ENCODE measurements at regions of chr5 and their contacts with region 1.

Region 1: DNA sequence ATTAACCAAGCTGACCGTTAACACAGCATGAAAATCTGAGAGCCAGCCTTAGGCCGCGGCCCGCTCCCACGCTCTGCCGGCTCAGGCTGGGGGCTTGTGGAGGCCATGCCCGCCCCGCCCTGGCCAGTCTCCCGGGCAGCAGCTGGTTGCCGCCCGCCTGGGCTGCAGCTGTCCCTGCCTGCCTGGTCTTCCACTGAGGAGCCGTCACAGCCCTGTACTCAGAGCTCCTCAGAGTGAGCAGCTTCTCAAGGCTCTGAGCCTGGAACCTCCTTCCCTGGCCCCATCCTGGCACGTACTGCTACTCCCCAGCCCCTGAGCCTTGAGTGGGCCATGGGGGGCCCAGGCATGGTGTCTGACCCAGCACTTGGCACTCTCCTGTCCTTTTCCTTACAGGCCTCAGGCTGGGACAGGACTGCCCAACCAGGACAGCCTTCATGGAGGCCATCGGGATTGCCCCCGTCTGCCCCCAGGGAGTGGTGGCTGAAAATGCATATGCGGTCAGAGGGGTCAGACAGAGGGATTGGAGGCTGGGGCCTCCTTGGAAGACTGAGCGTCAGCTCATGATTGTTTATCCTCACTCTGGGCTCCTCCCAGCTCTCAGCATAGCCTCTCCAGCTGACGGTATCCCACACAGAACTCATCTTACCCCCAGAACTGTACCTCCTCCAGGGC is 11.9 kb downstream of the FGFR4 start:
- DNase-seq: no peak
- H3K4me3 ChIP-seq: no peak overlapping the region
- H3K27ac ChIP-seq: peak overlapping the region; percentile 84
- H3K27me3 ChIP-seq: peaks cover under 1% of the 10 kb centered on the region
- CTCF ChIP-seq: no peak

Region 2: DNA sequence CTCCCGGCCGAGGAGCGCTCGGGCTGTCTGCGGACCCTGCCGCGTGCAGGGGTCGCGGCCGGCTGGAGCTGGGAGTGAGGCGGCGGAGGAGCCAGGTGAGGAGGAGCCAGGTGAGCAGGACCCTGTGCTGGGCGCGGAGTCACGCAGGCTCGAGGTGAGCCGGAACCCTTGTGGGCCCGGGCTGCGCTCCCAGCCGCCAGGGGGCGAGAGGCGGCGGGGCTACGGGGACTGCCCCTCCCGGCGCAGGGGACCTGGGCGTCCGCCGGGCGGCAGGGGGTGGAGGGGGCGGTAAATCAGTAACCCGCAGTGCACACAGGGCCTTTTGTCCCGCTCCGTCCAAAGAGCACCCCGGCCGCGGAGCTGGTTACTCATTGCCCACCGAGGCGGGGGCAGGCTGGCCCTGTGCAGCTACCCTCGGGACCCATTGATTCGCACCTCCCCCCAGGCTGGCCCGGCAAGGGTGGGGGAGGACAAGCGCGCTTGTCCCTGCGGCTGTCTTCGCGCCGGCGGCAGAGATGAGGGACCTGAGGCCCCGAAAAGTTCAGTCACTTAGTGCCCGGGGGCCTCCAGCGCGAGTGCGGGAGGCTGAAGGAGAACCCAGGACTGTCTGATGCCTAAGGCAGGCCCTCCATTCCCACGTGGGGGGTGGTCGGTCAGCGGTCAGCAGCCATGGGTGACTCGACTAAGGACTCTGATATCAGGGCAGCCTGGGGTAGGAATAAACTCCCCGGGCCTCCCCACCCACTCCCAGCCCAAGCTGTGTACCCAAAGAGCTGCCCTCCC is 11.5 kb before region 1 on chr5:
- CTCF ChIA-PET with region 1: interaction called, 13 read pairs
- POLR2A ChIA-PET with region 1: interaction called, 5 read pairs
- DNase-seq: no peak
- H3K4me3 ChIP-seq: peak overlapping the region; percentile 56
- H3K27ac ChIP-seq: no peak overlapping the region
- H3K27me3 ChIP-seq: peaks cover 15% of the 10 kb centered on the region
- CTCF ChIP-seq: peak; percentile 45

Measured in AG04450 (cell line).